ENCODE measurements at regions of chr5 and their contacts with region 1.

Region 1: GRCh38 chr5:177403792-177404640 is 3.6 kb upstream of the PFN3 start:
- DNase-seq: peak in 1 of 2 experiments; percentile 82
- H3K4me3 ChIP-seq: peak overlapping the region; percentile 9 to 65 (median 48); a peak in 7 of 8 replicates
- H3K27ac ChIP-seq: no peak overlapping the region
- H3K4me1 ChIP-seq: peaks cover 0 to 22% (median 14%) of the 10 kb centered on the region in 4 experiments; a peak in 5 of 7 replicates
- H3K27me3 ChIP-seq: peaks cover 22 to 68% (median 43%) of the 10 kb centered on the region in 4 experiments
- CTCF ChIP-seq: peak in 2 of 3 experiments; percentile 49 to 61; a peak in 3 of 4 replicates
- EP300 ChIP-seq: no peak
- POLR2A ChIP-seq: no peak
- RAD21 ChIP-seq: peak; percentile 48 to 74

Region 2: GRCh38 chr5:177311723-177312648 is 92.0 kb before region 1 on chr5 and contains the start of gene MXD3:
- CTCF ChIA-PET with region 1: interaction called, 31 read pairs
- POLR2A ChIA-PET with region 1: interaction called, 4 read pairs
- DNase-seq: peak; percentile 95 to 98
- H3K4me3 ChIP-seq: peak within 1 kb of the TSS; percentile 52 to 75 (median 67)
- H3K27ac ChIP-seq: peak within 1 kb of the TSS; percentile 89
- H3K4me1 ChIP-seq: peaks cover 0 to 19% (median 14%) of the 10 kb centered on the region in 4 experiments; a peak in 6 of 7 replicates
- H3K27me3 ChIP-seq: no peaks in the 10 kb centered on the region
- CTCF ChIP-seq: no peak
- EP300 ChIP-seq: no peak
- POLR2A ChIP-seq: peak in 1 of 2 experiments; percentile 60; a peak in 2 of 3 replicates
- RAD21 ChIP-seq: no peak
- total RNA-seq, gene MXD3: 7.7 and 10.3 TPM in 2 replicates

Region 3: GRCh38 chr5:177357459-177358351 is 46.3 kb before region 1 on chr5 and contains the start of gene RGS14:
- CTCF ChIA-PET with region 1: interaction called, 20 read pairs
- POLR2A ChIA-PET with region 1: no interaction called
- DNase-seq: no peak
- H3K4me3 ChIP-seq: no peak within 1 kb of the TSS
- H3K27ac ChIP-seq: no peak within 1 kb of the TSS
- H3K4me1 ChIP-seq: peaks cover 0 to 10% (median 6%) of the 10 kb centered on the region in 4 experiments; a peak in 6 of 7 replicates
- H3K27me3 ChIP-seq: peaks cover 0 to 8% (median 1%) of the 10 kb centered on the region in 4 experiments; a peak in 3 of 7 replicates
- CTCF ChIP-seq: no peak
- EP300 ChIP-seq: no peak
- POLR2A ChIP-seq: no peak
- RAD21 ChIP-seq: no peak
- total RNA-seq, gene RGS14: 20.6 and 24.4 TPM in 2 replicates

Region 4: DNA sequence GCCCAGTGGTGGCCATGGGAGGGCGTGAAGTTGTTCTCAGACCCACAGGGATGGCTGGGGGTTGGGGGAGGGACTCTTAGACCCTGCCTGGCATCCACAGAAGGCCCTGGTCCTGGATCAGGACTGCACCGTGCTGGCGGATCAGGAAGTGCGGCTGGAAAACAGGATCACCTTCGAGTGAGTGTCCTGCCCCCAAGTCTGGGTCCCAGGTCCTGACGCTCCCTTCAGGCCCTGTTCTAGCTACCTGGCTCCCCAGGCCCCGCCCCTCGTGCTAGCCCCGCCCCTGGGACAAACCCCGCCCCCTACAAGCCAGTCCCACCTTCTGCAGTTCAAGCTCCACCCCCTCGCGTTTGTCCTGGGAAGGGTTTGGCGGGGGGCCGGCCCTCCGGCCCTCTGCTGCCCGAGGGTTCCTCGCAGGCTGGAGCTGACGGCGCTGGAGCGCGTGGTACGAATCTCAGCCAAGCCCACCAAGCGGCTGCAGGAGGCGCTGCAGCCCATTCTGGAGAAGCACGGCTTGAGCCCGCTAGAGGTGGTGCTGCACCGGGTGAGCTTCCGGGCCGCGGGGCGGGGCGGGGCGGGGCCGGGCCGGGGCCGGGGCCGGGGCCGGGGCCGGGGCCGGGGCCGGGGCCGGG is 33.4 kb before region 1 on chr5:
- CTCF ChIA-PET with region 1: interaction called, 72 read pairs
- POLR2A ChIA-PET with region 1: interaction called, 6 read pairs
- DNase-seq: peak; percentile 93 to 99
- H3K4me3 ChIP-seq: peak overlapping the region; percentile 23 to 63 (median 58); a peak in 6 of 8 replicates
- H3K27ac ChIP-seq: 0 out of 2 replicates have a peak overlapping the region, but pooled peaks have one; percentile 60
- H3K4me1 ChIP-seq: peaks cover 8 to 36% (median 31%) of the 10 kb centered on the region in 4 experiments
- H3K27me3 ChIP-seq: peaks cover 1 to 14% (median 12%) of the 10 kb centered on the region in 4 experiments; a peak in 4 of 7 replicates
- CTCF ChIP-seq: peak in 2 of 3 experiments; percentile 79 to 98; a peak in 3 of 4 replicates
- EP300 ChIP-seq: no peak
- POLR2A ChIP-seq: 0 out of 3 replicates have a peak, but pooled peaks of 1 of the 2 experiments have one; percentile 16
- RAD21 ChIP-seq: peak; percentile 66 to 75

Region 5: DNA sequence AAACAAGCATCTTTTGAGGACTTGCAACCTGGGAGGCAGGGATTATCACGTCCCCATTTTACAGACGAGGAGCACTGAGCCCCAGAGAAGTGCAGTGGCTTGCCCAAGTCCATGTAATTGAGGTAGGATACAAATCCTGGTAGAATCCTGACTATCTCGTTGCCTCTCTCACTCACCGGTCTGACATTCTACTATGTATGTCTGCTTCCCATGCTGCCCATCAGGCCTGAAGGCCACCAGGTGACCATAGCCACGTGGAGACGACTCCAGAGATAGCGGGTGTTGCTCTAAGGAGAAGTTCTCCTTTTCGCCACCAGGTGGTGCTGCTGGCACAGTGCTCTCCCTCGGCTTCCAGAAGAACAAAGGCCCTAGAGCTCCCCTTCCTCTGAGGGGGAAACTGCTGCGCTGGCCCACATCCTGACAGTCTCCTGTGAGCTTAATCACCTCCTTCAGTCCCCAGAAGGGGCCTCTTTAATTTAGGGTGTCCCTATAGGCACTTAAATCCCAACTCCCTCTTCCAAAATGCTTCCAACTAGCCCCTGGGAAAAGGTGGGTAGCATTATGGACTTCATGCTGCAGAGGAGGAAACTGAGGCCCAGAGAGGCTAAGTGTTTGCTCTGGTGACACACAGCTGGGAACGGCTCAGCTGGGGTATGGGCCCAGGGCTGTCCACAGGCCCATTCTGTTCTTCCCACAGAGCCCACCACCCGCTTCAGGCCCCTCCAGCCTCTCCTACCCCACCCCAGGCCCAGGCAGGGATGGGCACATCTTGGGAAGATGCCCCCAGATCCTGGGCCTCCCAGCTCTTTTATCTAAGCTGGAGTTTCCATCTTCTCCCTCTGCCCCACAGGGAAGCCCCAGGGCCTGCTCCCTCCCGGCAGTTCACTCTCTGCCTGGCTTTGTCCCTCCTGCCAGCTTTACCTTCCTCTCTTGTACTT is 13.4 kb before region 1 on chr5:
- CTCF ChIA-PET with region 1: interaction called, 164 read pairs
- POLR2A ChIA-PET with region 1: interaction called, 6 read pairs
- DNase-seq: peak; percentile 89 to 95
- H3K4me3 ChIP-seq: no peak overlapping the region
- H3K27ac ChIP-seq: no peak overlapping the region
- H3K4me1 ChIP-seq: peaks cover 0 to 3% (median 0%) of the 10 kb centered on the region in 4 experiments; a peak in 4 of 7 replicates
- H3K27me3 ChIP-seq: peaks cover 0 to 17% (median 10%) of the 10 kb centered on the region in 4 experiments; a peak in 6 of 7 replicates
- CTCF ChIP-seq: peak in 2 of 3 experiments; percentile 97; a peak in 3 of 4 replicates
- EP300 ChIP-seq: no peak
- POLR2A ChIP-seq: no peak
- RAD21 ChIP-seq: peak; percentile 93 to 97

Region 6: DNA sequence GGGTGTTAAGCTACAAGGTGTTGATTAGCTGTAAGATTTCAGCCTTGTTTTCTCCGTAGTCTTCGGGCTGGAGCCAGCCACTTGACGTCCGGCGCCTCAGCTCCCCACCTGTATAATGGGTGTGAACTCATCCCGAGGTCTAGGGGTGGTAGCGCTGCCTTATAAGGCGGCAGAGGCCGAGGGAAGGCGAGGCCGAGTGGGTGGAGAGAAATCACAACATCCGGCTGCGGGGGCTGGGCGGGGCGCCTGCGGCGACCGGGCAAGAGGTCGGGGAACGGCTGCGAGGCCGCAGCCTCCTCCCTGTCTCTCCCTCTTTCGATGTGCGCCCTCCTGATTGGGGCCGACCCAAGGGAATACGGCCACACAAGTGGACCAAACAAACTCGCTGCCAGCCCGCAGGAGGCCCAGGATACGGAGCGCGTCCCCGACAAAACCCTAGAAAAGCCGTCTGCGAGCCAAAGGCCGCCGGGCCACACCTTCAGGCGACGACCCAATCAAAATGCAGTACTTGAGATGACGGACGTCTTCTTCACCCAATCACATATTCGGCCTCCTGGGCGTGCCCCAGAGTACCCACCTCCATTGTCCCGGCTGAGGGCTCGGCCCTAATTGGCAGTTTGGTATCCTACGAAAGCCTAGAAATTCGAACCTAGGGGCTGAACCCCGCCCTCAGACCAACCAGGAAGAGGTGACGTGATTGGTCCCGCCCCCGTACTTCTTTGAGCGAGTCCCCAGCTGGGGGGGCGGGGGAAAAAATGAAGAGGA is 22.0 kb after region 1 on chr5:
- CTCF ChIA-PET with region 1: interaction called, 57 read pairs
- POLR2A ChIA-PET with region 1: interaction called, 27 read pairs
- DNase-seq: peak; percentile 97 to 100
- H3K4me3 ChIP-seq: peak overlapping the region; percentile 52 to 71 (median 64)
- H3K27ac ChIP-seq: peak overlapping the region; percentile 86; the same call in 1 of the 2 replicates
- H3K4me1 ChIP-seq: peaks cover 4 to 14% (median 9%) of the 10 kb centered on the region in 4 experiments; a peak in 6 of 7 replicates
- H3K27me3 ChIP-seq: no peaks in the 10 kb centered on the region
- CTCF ChIP-seq: no peak
- EP300 ChIP-seq: peak in 1 of 2 experiments; percentile 69; a peak in 1 of 3 replicates
- POLR2A ChIP-seq: peak in 1 of 2 experiments; percentile 95; a peak in 2 of 3 replicates
- RAD21 ChIP-seq: no peak

Region 7: GRCh38 chr5:177446200-177447065 is 42.4 kb after region 1 on chr5 and contains the start of gene PRR7:
- CTCF ChIA-PET with region 1: interaction called, 343 read pairs
- POLR2A ChIA-PET with region 1: interaction called, 143 read pairs
- DNase-seq: peak in 1 of 2 experiments; percentile 81
- H3K4me3 ChIP-seq: peak within 1 kb of the TSS; percentile 46 to 74 (median 64)
- H3K27ac ChIP-seq: peak within 1 kb of the TSS; percentile 59
- H3K4me1 ChIP-seq: peaks cover 0 to 30% (median 15%) of the 10 kb centered on the region in 4 experiments; a peak in 6 of 7 replicates
- H3K27me3 ChIP-seq: peaks cover 0 to 13% (median 5%) of the 10 kb centered on the region in 4 experiments; a peak in 5 of 7 replicates
- CTCF ChIP-seq: no peak
- EP300 ChIP-seq: no peak
- POLR2A ChIP-seq: peak in 1 of 2 experiments; percentile 75; a peak in 2 of 3 replicates
- RAD21 ChIP-seq: no peak
- total RNA-seq, gene PRR7: 8.0 and 8.6 TPM in 2 replicates

Region 8: GRCh38 chr5:177984565-177985206 is 580.7 kb after region 1 on chr5:
- CTCF ChIA-PET with region 1: no interaction called
- POLR2A ChIA-PET with region 1: no interaction called
- DNase-seq: no peak
- H3K4me3 ChIP-seq: peak overlapping the region in 3 of 4 experiments; percentile 19 to 62 (median 34); a peak in 5 of 8 replicates
- H3K27ac ChIP-seq: no peak overlapping the region
- H3K4me1 ChIP-seq: peaks cover 0 to 10% (median 6%) of the 10 kb centered on the region in 4 experiments; a peak in 3 of 7 replicates
- H3K27me3 ChIP-seq: peaks cover 4 to 43% (median 26%) of the 10 kb centered on the region in 4 experiments; a peak in 6 of 7 replicates
- CTCF ChIP-seq: no peak
- EP300 ChIP-seq: no peak
- POLR2A ChIP-seq: no peak
- RAD21 ChIP-seq: no peak

Measured in H1 (cell line).